B cell (primary cell): ENCODE measurements at regions of chr2 and their contacts with region 1.

Region 1: DNA sequence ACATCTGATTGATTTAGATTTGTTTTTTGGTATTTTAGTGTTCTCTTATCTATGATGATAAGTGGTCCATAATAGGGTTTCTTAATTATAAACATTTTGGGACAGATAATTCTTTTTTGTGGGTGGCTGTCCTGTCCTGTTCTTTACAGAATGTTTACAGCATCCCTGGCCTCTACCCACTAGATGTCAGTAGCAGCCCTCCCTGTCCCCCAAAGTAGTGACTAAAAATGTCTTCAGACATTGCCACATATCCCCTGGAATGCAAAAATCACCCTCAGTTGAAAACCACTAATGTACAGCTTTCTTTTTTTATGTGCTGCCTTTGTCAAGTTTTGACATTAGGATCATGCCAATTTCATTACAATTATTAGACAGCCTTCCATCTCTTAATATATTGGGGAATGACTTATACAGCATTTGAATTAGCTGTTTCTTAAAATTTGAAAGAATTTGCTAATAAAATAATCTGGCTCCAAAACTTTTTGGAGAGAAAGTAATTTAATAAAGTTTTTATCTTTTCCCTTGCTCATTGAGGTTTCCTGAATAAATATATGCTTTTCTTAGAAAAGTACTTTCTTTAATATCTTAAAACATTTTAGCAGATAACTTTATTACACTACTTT is 19.5 kb downstream of the WIPF1 start:
- DNase-seq: peak; percentile 78
- ATAC-seq: peak; percentile 72
- H3K4me3 ChIP-seq: no peak overlapping the region
- H3K4me3 Mint-ChIP-seq: no peak overlapping the region
- H3K27ac ChIP-seq: peak overlapping the region in 1 of 2 donors; percentile 72
- H3K27ac Mint-ChIP-seq: peak overlapping the region; percentile 57
- H3K4me1 ChIP-seq: peaks cover 31 to 34% of the 10 kb centered on the region in 2 donors
- H3K4me1 Mint-ChIP-seq: peaks cover 52% of the 10 kb centered on the region
- H3K27me3 ChIP-seq: no peaks in the 10 kb centered on the region
- H3K27me3 Mint-ChIP-seq: no peaks in the 10 kb centered on the region
- CTCF ChIP-seq: peak; percentile 81

Region 2: DNA sequence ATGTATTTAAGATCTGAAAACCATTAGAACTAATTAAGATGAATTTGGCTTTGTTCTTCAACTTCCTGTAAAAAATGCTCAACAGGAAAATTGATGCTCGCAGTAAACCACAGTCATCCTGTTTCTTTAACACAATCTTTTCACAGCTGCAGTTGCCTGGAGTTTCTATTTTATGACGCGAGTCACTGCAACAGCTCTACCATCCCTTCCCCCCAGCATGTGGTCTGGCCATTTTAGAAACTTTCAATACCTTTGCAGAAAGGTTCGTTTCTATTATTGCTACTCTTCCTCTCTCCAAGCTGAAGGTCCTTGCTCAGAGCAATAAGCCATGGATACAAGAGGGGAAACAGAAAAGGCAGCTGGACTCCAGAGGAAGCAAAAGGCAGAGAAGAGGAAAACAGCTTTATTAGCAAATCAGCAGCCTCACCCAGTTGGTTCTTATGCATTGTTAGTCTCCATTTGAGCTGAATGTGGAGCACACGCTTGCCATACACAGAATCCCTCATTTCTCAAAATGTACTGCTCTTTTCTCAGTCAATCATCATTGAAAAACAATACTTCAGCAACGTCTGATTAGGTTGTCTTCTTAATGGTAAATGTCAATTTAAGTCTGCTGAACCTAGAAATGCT is 15.6 kb after region 1 on chr2:
- CTCF ChIA-PET with region 1: interaction called, 384 read pairs
- POLR2A ChIA-PET with region 1: interaction called, 5 read pairs
- intact Hi-C with region 1: loop called (anchors 1 kb)
- DNase-seq: peak; percentile 88
- ATAC-seq: peak; percentile 66
- H3K4me3 ChIP-seq: peak overlapping the region; percentile 53 to 92 (median 71)
- H3K4me3 Mint-ChIP-seq: peak overlapping the region; percentile 93
- H3K27ac ChIP-seq: peak overlapping the region; percentile 93 to 98
- H3K27ac Mint-ChIP-seq: peak overlapping the region; percentile 96
- H3K4me1 ChIP-seq: peaks cover 63 to 65% of the 10 kb centered on the region in 2 donors
- H3K4me1 Mint-ChIP-seq: peaks cover 65% of the 10 kb centered on the region
- H3K27me3 ChIP-seq: no peaks in the 10 kb centered on the region
- H3K27me3 Mint-ChIP-seq: no peaks in the 10 kb centered on the region
- CTCF ChIP-seq: no peak

Region 3: GRCh38 chr2:174634130-174635014 is 56.3 kb after region 1 on chr2:
- CTCF ChIA-PET with region 1: interaction called, 34 read pairs
- POLR2A ChIA-PET with region 1: no interaction called
- intact Hi-C with region 1: loop called (anchors 1 kb)
- DNase-seq: peak; percentile 81
- ATAC-seq: peak; percentile 83
- H3K4me3 ChIP-seq: peak overlapping the region; percentile 61 to 99 (median 77)
- H3K4me3 Mint-ChIP-seq: peak overlapping the region; percentile 96
- H3K27ac ChIP-seq: peak overlapping the region; percentile 83 to 87
- H3K27ac Mint-ChIP-seq: peak overlapping the region; percentile 92
- H3K4me1 ChIP-seq: peaks cover 43 to 49% of the 10 kb centered on the region in 2 donors
- H3K4me1 Mint-ChIP-seq: peaks cover 60% of the 10 kb centered on the region
- H3K27me3 ChIP-seq: no peaks in the 10 kb centered on the region
- H3K27me3 Mint-ChIP-seq: no peaks in the 10 kb centered on the region
- CTCF ChIP-seq: peak; percentile 13

Region 4: GRCh38 chr2:174682578-174683391 is 104.7 kb after region 1 on chr2:
- CTCF ChIA-PET with region 1: interaction called, 331 read pairs
- POLR2A ChIA-PET with region 1: interaction called, 5 read pairs
- intact Hi-C with region 1: loop called (anchors 1 kb)
- DNase-seq: peak; percentile 72
- ATAC-seq: peak; percentile 70
- H3K4me3 ChIP-seq: peak overlapping the region; percentile 67 to 87 (median 72)
- H3K4me3 Mint-ChIP-seq: peak overlapping the region; percentile 93
- H3K27ac ChIP-seq: peak overlapping the region in 1 of 2 donors; percentile 67
- H3K27ac Mint-ChIP-seq: peak overlapping the region; percentile 86
- H3K4me1 ChIP-seq: peaks cover 8 to 14% of the 10 kb centered on the region in 2 donors
- H3K4me1 Mint-ChIP-seq: peaks cover 21% of the 10 kb centered on the region
- H3K27me3 ChIP-seq: no peaks in the 10 kb centered on the region
- H3K27me3 Mint-ChIP-seq: no peaks in the 10 kb centered on the region
- CTCF ChIP-seq: no peak

Region 5: GRCh38 chr2:174697255-174697654 is 119.2 kb after region 1 on chr2:
- CTCF ChIA-PET with region 1: interaction called, 331 read pairs
- POLR2A ChIA-PET with region 1: no interaction called
- intact Hi-C with region 1: no loop called
- DNase-seq: peak; percentile 73
- ATAC-seq: peak; percentile 92
- H3K4me3 ChIP-seq: no peak overlapping the region
- H3K4me3 Mint-ChIP-seq: no peak overlapping the region
- H3K27ac ChIP-seq: no peak overlapping the region
- H3K27ac Mint-ChIP-seq: no peak overlapping the region
- H3K4me1 ChIP-seq: no peaks in the 10 kb centered on the region
- H3K4me1 Mint-ChIP-seq: no peaks in the 10 kb centered on the region
- H3K27me3 ChIP-seq: peaks cover 0 to 18% (median 0%) of the 10 kb centered on the region in 4 experiments
- H3K27me3 Mint-ChIP-seq: peaks cover 16% of the 10 kb centered on the region
- CTCF ChIP-seq: peak; percentile 84

Region 6: DNA sequence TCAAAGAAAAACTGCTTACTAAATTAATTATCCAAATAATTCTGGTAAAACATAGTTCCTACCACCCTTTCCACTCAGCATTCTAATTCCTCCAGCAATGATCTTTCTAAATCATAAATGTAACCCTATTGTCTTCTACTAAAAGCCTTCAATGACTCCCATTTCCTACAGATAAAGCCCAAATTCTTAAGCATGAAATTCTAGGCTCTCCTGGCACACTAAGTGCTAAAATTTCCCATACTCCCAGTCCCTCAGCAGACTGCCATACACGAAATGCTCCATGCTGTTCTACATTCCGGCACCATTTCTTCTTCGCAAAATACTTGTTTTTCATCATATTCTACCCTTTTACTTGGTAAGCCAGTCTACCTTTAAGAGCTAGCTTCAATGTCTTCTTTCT is 330.2 kb after region 1 on chr2:
- CTCF ChIA-PET with region 1: no interaction called
- POLR2A ChIA-PET with region 1: no interaction called
- intact Hi-C with region 1: no loop called
- DNase-seq: no peak
- ATAC-seq: no peak
- H3K4me3 ChIP-seq: no peak overlapping the region
- H3K4me3 Mint-ChIP-seq: no peak overlapping the region
- H3K27ac ChIP-seq: no peak overlapping the region
- H3K27ac Mint-ChIP-seq: no peak overlapping the region
- H3K4me1 ChIP-seq: no peaks in the 10 kb centered on the region
- H3K4me1 Mint-ChIP-seq: no peaks in the 10 kb centered on the region
- H3K27me3 ChIP-seq: peaks cover 0 to 2% (median 0%) of the 10 kb centered on the region in 4 experiments
- H3K27me3 Mint-ChIP-seq: peaks cover 11% of the 10 kb centered on the region
- CTCF ChIP-seq: no peak